Natural killer cell (primary cell): ENCODE measurements at regions of chr4 and their contacts with region 1.

Region 1: GRCh38 chr4:7845493-7846128 is 94.0 kb downstream of the AFAP1 start:
- DNase-seq: peak in 1 of 2 donors; percentile 51
- ATAC-seq: no peak
- H3K4me3 ChIP-seq: no peak overlapping the region
- H3K4me3 Mint-ChIP-seq: no peak overlapping the region
- H3K27ac ChIP-seq: no peak overlapping the region
- H3K27ac Mint-ChIP-seq: no peak overlapping the region
- H3K4me1 ChIP-seq: no peaks in the 10 kb centered on the region
- H3K4me1 Mint-ChIP-seq: peaks cover 9% of the 10 kb centered on the region in 2 donors
- H3K27me3 ChIP-seq: no peaks in the 10 kb centered on the region
- H3K27me3 Mint-ChIP-seq: peaks cover 4 to 16% of the 10 kb centered on the region in 2 donors
- CTCF ChIP-seq: no peak

Region 2: GRCh38 chr4:7987148-7987989 is 141.8 kb after region 1 on chr4:
- intact Hi-C with region 1: loop called (anchors 1 kb)
- DNase-seq: peak; percentile 74 to 89
- ATAC-seq: peak; percentile 72 to 94 (median 89)
- H3K4me3 ChIP-seq: no peak overlapping the region
- H3K4me3 Mint-ChIP-seq: no peak overlapping the region
- H3K27ac ChIP-seq: no peak overlapping the region
- H3K27ac Mint-ChIP-seq: no peak overlapping the region
- H3K4me1 ChIP-seq: peaks cover 12% of the 10 kb centered on the region
- H3K4me1 Mint-ChIP-seq: peaks cover 6 to 15% of the 10 kb centered on the region in 2 donors
- H3K27me3 ChIP-seq: no peaks in the 10 kb centered on the region
- H3K27me3 Mint-ChIP-seq: peaks cover 6 to 7% of the 10 kb centered on the region in 2 donors
- CTCF ChIP-seq: peak; percentile 88